BJ (cell line): ENCODE measurements at regions of chr10 and their contacts with region 1.

Region 1: DNA sequence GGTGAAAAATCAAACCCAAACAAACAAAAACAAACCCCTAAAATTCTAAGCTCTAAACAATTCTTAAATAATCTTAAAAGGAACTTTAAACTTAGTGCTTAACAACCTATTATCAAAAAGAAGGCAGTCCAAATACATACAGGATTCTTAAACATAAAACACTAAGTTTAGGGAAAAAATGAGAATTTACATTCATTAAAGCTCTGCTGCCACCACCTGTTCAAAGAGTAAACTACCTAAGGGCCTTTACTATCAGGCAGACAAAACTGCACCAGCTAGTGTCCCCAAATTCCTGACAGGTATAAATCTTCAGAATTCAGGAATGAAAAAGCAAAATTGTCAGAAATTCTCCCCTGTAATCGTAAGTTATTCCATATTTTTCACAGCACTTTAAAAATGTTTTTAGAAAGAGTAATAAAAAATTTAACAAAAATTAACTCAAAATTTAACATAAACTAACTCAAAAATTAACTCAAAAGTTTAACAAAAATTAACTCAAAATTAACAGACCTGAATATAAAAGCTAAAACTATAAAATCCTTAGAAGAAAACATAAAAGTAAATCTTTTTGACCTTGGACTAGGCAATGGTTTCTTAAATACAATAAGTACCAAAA is 55.1 kb downstream of the PDZD8 start:
- DNase-seq: no peak
- H3K4me3 ChIP-seq: no peak overlapping the region
- H3K27me3 ChIP-seq: no peaks in the 10 kb centered on the region
- CTCF ChIP-seq: peak; percentile 64

Region 2: GRCh38 chr10:117226824-117227451 is 93.2 kb before region 1 on chr10:
- CTCF ChIA-PET with region 1: interaction called, 28 read pairs
- POLR2A ChIA-PET with region 1: no interaction called
- DNase-seq: no peak
- H3K4me3 ChIP-seq: no peak overlapping the region
- H3K27me3 ChIP-seq: no peaks in the 10 kb centered on the region; the same call in none of the 2 replicates
- CTCF ChIP-seq: peak; percentile 57